ENCODE measurements at regions of chr17 and their contacts with region 1.

Region 1: GRCh38 chr17:79951361-79952264 is 84.1 kb downstream of the TBC1D16 start:
- DNase-seq: no peak
- H3K4me3 ChIP-seq: peak overlapping the region in 1 of 4 experiments; percentile 54; a peak in 1 of 8 replicates
- H3K27ac ChIP-seq: no peak overlapping the region; the same call in 1 of the 2 replicates
- H3K4me1 ChIP-seq: peaks cover 20 to 64% (median 47%) of the 10 kb centered on the region in 4 experiments
- H3K27me3 ChIP-seq: no peaks in the 10 kb centered on the region
- CTCF ChIP-seq: no peak
- EP300 ChIP-seq: no peak
- POLR2A ChIP-seq: no peak
- RAD21 ChIP-seq: no peak

Region 2: GRCh38 chr17:79933863-79934652 is 17.6 kb before region 1 on chr17:
- CTCF ChIA-PET with region 1: interaction called, 6 read pairs
- POLR2A ChIA-PET with region 1: interaction called, 152 read pairs
- DNase-seq: no peak
- H3K4me3 ChIP-seq: no peak overlapping the region
- H3K27ac ChIP-seq: no peak overlapping the region; the same call in 1 of the 2 replicates
- H3K4me1 ChIP-seq: peaks cover 3 to 46% (median 29%) of the 10 kb centered on the region in 4 experiments
- H3K27me3 ChIP-seq: peaks cover 0 to 3% (median 1%) of the 10 kb centered on the region in 4 experiments; a peak in 2 of 7 replicates
- CTCF ChIP-seq: no peak
- EP300 ChIP-seq: no peak
- POLR2A ChIP-seq: no peak; a peak in 1 of 3 replicates
- RAD21 ChIP-seq: no peak

Region 3: DNA sequence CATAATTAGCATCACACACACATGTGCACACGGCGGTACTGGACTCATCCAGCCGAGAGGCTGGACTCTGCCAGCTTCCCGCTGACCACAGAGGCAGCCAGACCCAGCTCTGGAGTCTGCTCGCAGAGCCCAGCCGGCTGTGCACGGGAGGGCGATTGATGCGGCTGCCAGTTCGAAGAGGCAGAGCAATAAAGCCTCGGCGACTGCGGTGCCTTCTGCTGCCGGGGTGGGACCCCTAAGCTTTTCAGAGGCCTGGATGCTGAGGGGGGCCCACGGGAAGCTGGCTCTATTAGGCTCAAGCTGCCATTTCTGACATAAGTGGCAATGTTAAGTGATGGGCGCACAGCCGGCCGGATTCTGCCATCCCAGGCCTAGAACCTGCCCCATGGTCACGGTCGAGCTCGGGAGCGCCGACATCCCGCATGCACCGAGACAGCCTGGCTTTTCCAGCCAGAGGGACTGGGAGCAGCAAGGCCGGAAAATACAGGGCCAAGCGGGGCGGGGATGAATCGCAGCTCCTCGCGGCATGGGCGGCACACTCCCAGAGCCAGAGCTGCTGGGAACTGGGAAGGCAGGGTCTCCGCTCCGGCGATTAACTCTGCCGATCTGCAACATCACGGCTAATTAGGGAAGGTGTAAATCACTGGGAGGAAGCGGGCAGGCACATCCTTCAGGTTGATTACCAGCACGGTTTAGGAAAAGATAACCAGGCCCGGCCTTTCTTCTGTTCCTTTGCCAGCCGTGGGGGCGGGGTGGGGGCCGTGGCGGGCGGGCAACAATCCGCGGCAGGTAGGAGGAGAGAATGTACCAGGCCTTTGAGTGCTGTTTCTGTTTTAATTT is 26.3 kb after region 1 on chr17:
- CTCF ChIA-PET with region 1: interaction called, 187 read pairs
- POLR2A ChIA-PET with region 1: interaction called, 21 read pairs
- DNase-seq: no peak
- H3K4me3 ChIP-seq: no peak overlapping the region
- H3K27ac ChIP-seq: no peak overlapping the region
- H3K4me1 ChIP-seq: peaks cover 0 to 9% (median 2%) of the 10 kb centered on the region in 4 experiments; a peak in 4 of 7 replicates
- H3K27me3 ChIP-seq: no peaks in the 10 kb centered on the region
- CTCF ChIP-seq: no peak
- EP300 ChIP-seq: no peak
- POLR2A ChIP-seq: no peak
- RAD21 ChIP-seq: no peak

Region 4: DNA sequence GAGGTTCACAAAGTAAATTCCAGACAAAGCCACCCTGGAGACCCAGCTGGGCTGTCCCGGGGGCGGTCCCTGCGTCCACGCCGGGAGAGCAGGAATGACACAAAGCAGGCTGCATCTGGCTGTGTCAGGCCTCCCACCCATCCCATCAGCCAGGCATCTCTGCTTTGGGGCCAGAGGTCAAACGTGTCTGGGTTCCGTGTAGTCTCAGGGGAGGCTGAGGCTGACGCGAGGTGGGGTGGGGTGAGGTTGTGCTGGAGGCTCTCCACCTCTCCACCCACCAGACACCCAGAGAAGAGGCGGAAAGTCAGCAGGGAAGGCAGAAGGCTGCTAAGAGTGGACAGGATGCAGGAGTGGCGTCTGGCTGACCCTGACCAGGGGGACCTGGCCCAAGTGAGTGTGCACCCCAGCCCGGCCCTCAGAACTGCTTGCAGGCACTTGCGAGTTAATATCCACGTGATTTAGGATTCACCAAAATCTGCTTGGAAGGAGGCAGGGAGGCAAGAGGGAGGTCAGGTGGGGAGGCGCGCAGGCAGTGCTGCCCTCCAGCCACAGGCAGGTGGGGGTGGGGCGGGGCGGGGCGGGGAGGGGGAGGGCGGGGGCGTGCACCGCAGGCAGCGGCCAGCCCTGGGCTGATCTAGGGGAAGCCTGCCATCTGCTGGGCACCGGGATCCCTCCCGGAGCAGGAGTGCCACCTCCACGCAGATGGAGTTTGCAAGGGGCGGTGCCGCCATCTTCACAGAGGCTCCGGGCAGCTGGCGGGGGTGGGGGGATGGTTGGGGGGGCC is 39.7 kb after region 1 on chr17:
- CTCF ChIA-PET with region 1: interaction called, 6 read pairs
- POLR2A ChIA-PET with region 1: interaction called, 12 read pairs
- DNase-seq: peak; percentile 44 to 90
- H3K4me3 ChIP-seq: peak overlapping the region in 1 of 4 experiments; percentile 55; a peak in 3 of 8 replicates
- H3K27ac ChIP-seq: peak overlapping the region; percentile 53; the same call in 1 of the 2 replicates
- H3K4me1 ChIP-seq: peaks cover 15 to 37% (median 28%) of the 10 kb centered on the region in 4 experiments
- H3K27me3 ChIP-seq: peaks cover 0 to 2% (median 0%) of the 10 kb centered on the region in 4 experiments; a peak in 2 of 7 replicates
- CTCF ChIP-seq: peak; percentile 60 to 86 (median 75)
- EP300 ChIP-seq: no peak
- POLR2A ChIP-seq: no peak
- RAD21 ChIP-seq: peak; percentile 64 to 74

Measured in H1 (cell line).